Left cardiac atrium (tissue), 4 donors: ENCODE measurements at regions of chrX and their contacts with region 1.

Region 1: GRCh38 chrX:16719334-16720084 is at the start of gene SYAP1:
- DNase-seq: peak; percentile 98
- ATAC-seq: peak; percentile 98 to 99
- total RNA-seq, gene SYAP1: 15.6 to 25.3 TPM

Region 2: DNA sequence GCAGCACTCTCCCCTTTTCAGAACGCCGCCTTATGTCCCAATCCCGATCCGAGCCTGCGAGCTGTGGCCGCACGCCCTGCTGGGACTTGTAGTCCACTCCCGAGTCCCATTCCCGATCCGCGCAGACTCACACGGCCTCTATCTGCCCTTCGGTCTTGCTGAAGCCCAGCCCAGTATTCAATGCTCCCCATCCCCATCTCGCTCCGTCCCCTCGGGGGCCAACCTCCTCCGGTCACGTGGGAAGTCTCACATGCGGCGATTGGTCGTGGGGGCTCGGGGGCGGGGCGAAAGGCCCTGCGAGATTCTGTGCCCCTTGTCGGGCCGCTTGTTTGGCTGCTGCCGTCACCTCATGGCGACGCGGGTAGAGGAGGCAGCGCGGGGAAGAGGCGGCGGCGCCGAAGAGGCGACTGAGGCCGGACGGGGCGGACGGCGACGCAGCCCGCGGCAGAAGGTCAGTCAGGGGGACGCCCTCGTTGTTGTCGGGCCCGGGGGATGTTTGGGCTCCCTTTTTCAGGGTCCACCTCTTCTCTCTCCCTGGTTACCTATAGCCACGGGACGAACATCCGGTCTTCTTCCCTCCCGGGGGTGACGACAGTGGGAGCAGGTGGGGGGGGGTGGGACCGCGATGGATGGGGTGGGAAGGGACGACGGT is 66.8 kb after region 1 on chrX and contains the start of gene TXLNG:
- intact Hi-C with region 1: loop called in 1 of 2 experiments (anchors 5 kb)
- DNase-seq: peak; percentile 99
- ATAC-seq: peak; percentile 99
- total RNA-seq, gene TXLNG: 6.5 to 9.0 TPM